Activated CD4-positive, alpha-beta T cell treated with anti-CD3 and anti-CD28 coated beads for 36 hours (primary cell): ENCODE measurements at regions of chr6 and their contacts with region 1.

Region 1: GRCh38 chr6:31541658-31542521 is at the start of gene DDX39B:
- DNase-seq: peak; percentile 96
- ATAC-seq: peak; percentile 77
- H3K4me3 Mint-ChIP-seq: peak within 1 kb of the TSS; percentile 79
- H3K27ac Mint-ChIP-seq: peak within 1 kb of the TSS; percentile 92
- H3K4me1 Mint-ChIP-seq: peaks cover 50% of the 10 kb centered on the region
- H3K27me3 Mint-ChIP-seq: no peaks in the 10 kb centered on the region
- total RNA-seq, gene DDX39B: 517 to 569 TPM

Region 2: GRCh38 chr6:31403283-31403989 is 138.5 kb before region 1 on chr6 and contains the start of gene MICA:
- CTCF ChIA-PET with region 1: no interaction called
- POLR2A ChIA-PET with region 1: no interaction called
- intact Hi-C with region 1: loop called (anchors 1 to 5 kb)
- DNase-seq: peak; percentile 83
- ATAC-seq: peak; percentile 68
- H3K4me3 Mint-ChIP-seq: peak within 1 kb of the TSS; percentile 71
- H3K27ac Mint-ChIP-seq: peak within 1 kb of the TSS; percentile 71
- H3K4me1 Mint-ChIP-seq: peaks cover 62% of the 10 kb centered on the region
- H3K27me3 Mint-ChIP-seq: no peaks in the 10 kb centered on the region
- total RNA-seq, gene MICA: 6.3 to 7.1 TPM

Region 3: DNA sequence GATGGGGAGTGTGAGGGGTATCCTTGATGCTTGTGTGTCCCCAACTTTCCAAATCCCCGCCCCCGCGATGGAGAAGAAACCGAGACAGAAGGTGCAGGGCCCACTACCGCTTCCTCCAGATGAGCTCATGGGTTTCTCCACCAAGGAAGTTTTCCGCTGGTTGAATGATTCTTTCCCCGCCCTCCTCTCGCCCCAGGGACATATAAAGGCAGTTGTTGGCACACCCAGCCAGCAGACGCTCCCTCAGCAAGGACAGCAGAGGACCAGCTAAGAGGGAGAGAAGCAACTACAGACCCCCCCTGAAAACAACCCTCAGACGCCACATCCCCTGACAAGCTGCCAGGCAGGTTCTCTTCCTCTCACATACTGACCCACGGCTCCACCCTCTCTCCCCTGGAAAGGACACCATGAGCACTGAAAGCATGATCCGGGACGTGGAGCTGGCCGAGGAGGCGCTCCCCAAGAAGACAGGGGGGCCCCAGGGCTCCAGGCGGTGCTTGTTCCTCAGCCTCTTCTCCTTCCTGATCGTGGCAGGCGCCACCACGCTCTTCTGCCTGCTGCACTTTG is 33.5 kb after region 1 on chr6 and contains the start of gene TNF:
- CTCF ChIA-PET with region 1: interaction called, 278 read pairs
- POLR2A ChIA-PET with region 1: interaction called, 24 read pairs
- intact Hi-C with region 1: loop called (anchors 1 to 2 kb)
- DNase-seq: peak; percentile 89
- ATAC-seq: peak; percentile 23
- H3K4me3 Mint-ChIP-seq: peak within 1 kb of the TSS; percentile 97
- H3K27ac Mint-ChIP-seq: peak within 1 kb of the TSS; percentile 98
- H3K4me1 Mint-ChIP-seq: peaks cover 73% of the 10 kb centered on the region
- H3K27me3 Mint-ChIP-seq: no peaks in the 10 kb centered on the region
- total RNA-seq, gene TNF: 82.3 to 93.3 TPM

Region 4: DNA sequence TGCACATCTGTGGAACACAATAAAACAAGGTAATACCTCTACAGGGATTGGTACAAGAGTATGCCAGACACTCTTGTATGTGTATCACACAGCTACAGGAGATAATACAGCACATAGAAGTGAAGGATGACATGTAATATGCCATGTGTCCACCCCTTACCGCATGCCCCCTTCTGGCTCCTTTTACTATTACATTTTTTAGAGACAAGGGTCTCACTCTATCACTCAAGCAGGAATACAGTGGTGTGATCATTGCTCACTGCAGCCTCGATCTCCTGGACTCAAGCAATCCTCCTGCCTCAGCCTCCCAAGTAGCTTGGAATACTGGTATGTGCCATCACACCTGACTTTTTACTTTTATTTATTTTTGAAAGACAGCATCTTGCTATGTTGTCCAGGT is 55.1 kb after region 1 on chr6:
- CTCF ChIA-PET with region 1: interaction called, 658 read pairs
- POLR2A ChIA-PET with region 1: interaction called, 12 read pairs
- intact Hi-C with region 1: loop called (anchors 1 kb)
- DNase-seq: peak; percentile 61
- ATAC-seq: peak; percentile 78
- H3K4me3 Mint-ChIP-seq: no peak overlapping the region
- H3K27ac Mint-ChIP-seq: no peak overlapping the region
- H3K4me1 Mint-ChIP-seq: peaks cover 46% of the 10 kb centered on the region
- H3K27me3 Mint-ChIP-seq: no peaks in the 10 kb centered on the region

Region 5: DNA sequence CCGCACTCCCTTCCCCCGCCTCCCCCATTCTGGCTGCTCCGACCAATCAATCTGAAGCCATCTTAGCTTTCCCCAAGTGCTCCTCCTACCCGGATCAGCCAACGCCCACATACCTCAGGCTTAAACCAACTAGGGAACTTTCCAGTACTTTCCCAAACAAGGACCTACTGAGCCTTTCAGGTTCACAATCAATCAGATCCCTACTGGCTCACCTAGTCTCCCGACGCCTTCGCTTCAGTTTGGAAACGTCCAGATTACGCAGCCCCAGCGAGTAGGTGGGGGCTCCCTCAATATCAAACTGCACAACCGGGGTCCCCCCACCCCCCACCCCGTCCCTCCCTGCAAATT is 272.8 kb after region 1 on chr6:
- CTCF ChIA-PET with region 1: no interaction called
- POLR2A ChIA-PET with region 1: interaction called, 3 read pairs
- intact Hi-C with region 1: loop called in 1 of 2 experiments (anchors 5 kb)
- DNase-seq: peak; percentile 83
- ATAC-seq: peak; percentile 40
- H3K4me3 Mint-ChIP-seq: peak overlapping the region; percentile 72
- H3K27ac Mint-ChIP-seq: peak overlapping the region; percentile 79
- H3K4me1 Mint-ChIP-seq: peaks cover 50% of the 10 kb centered on the region
- H3K27me3 Mint-ChIP-seq: no peaks in the 10 kb centered on the region

Region 6: DNA sequence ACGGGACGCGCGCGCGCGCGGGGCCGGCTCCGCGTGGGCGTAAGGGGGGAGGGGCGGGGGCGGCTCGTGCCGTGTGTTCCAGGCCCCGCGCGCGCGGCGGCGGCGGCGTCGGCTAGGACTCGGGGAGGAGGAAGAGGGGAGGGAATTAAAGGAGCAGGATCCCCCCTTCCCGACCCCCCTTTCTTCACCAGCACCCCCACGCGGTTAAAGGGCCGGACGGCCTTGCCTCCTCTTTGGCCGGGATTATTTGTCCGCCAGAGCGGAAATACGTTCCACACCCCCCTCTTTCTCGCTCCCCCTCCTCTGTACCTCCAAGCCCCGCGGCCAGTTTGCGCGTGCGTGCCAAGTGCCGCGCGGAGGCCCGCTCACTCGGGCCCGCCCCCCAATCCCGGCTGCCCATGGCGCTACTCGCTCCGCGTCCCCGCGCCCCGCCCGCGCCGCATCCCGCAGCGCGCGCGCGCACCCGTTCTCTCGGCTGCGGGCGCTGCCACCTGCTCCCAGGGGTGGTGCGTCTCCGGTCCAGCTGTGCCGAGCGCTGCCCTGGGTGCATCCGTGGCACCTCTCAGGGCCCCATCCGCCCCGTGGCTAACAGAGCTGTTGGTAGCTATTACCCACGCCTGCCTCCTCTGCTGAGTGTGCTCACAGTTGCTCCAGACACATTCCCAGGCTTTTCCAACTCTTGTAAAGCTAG is 360.2 kb after region 1 on chr6 and contains the start of gene ZBTB12:
- CTCF ChIA-PET with region 1: no interaction called
- POLR2A ChIA-PET with region 1: no interaction called
- intact Hi-C with region 1: loop called in 1 of 2 experiments (anchors 2 kb)
- DNase-seq: peak; percentile 92
- ATAC-seq: peak; percentile 63
- H3K4me3 Mint-ChIP-seq: peak within 1 kb of the TSS; percentile 69
- H3K27ac Mint-ChIP-seq: peak within 1 kb of the TSS; percentile 78
- H3K4me1 Mint-ChIP-seq: peaks cover 25% of the 10 kb centered on the region
- H3K27me3 Mint-ChIP-seq: no peaks in the 10 kb centered on the region
- total RNA-seq, gene ZBTB12: 1.9 to 2.4 TPM

Region 7: GRCh38 chr6:32177788-32178546 is 636.1 kb after region 1 on chr6 and contains the start of gene RNF5:
- CTCF ChIA-PET with region 1: no interaction called
- POLR2A ChIA-PET with region 1: no interaction called
- intact Hi-C with region 1: loop called in 1 of 2 experiments (anchors 5 kb)
- DNase-seq: peak; percentile 96
- ATAC-seq: peak; percentile 89
- H3K4me3 Mint-ChIP-seq: peak within 1 kb of the TSS; percentile 92
- H3K27ac Mint-ChIP-seq: peak within 1 kb of the TSS; percentile 98
- H3K4me1 Mint-ChIP-seq: peaks cover 70% of the 10 kb centered on the region
- H3K27me3 Mint-ChIP-seq: no peaks in the 10 kb centered on the region
- total RNA-seq, gene RNF5: 51.7 to 65.6 TPM